ENCODE measurements at regions of chr5 and their contacts with region 1.

Region 1: GRCh38 chr5:138028971-138029365 is 3.9 kb downstream of the FAM13B start:
- DNase-seq: no peak
- ATAC-seq: no peak
- H3K4me3 Mint-ChIP-seq: no peak overlapping the region
- H3K27ac Mint-ChIP-seq: peak overlapping the region; percentile 10
- H3K4me1 Mint-ChIP-seq: peaks cover 65% of the 10 kb centered on the region
- H3K27me3 Mint-ChIP-seq: no peaks in the 10 kb centered on the region

Region 2: GRCh38 chr5:138018844-138019243 is 10.1 kb before region 1 on chr5:
- CTCF ChIA-PET with region 1: interaction called, 11 read pairs
- POLR2A ChIA-PET with region 1: no interaction called
- DNase-seq: no peak
- ATAC-seq: no peak
- H3K4me3 Mint-ChIP-seq: no peak overlapping the region
- H3K27ac Mint-ChIP-seq: no peak overlapping the region
- H3K4me1 Mint-ChIP-seq: peaks cover 14% of the 10 kb centered on the region
- H3K27me3 Mint-ChIP-seq: no peaks in the 10 kb centered on the region

Region 3: GRCh38 chr5:138054847-138055558 is 26.0 kb after region 1 on chr5:
- CTCF ChIA-PET with region 1: no interaction called
- POLR2A ChIA-PET with region 1: no interaction called
- DNase-seq: no peak
- ATAC-seq: no peak
- H3K4me3 Mint-ChIP-seq: no peak overlapping the region
- H3K27ac Mint-ChIP-seq: no peak overlapping the region
- H3K4me1 Mint-ChIP-seq: no peaks in the 10 kb centered on the region
- H3K27me3 Mint-ChIP-seq: peaks cover 4% of the 10 kb centered on the region

Measured in activated CD8-positive, alpha-beta T cell treated with anti-CD3 and anti-CD28 coated beads, Interleukin-2, amount 10 ng/mL, durations not matched to agents 7 days and 5 days (primary cell).